Lower leg skin (tissue), 4 donors: ENCODE measurements at regions of chr13 and their contacts with region 1.

Region 1: GRCh38 chr13:77740931-77741596 is 43.6 kb downstream of the SLAIN1 start:
- DNase-seq: no peak
- H3K4me3 ChIP-seq: no peak overlapping the region
- CTCF ChIP-seq: no peak
- POLR2A ChIP-seq: no peak

Region 2: GRCh38 chr13:77599351-77599750 is 141.7 kb before region 1 on chr13:
- intact Hi-C with region 1: loop called (anchors 10 kb)
- DNase-seq: no peak
- H3K4me3 ChIP-seq: no peak overlapping the region
- CTCF ChIP-seq: no peak
- POLR2A ChIP-seq: no peak

Region 3: GRCh38 chr13:78382491-78382890 is 641.4 kb after region 1 on chr13:
- intact Hi-C with region 1: no loop called
- DNase-seq: no peak
- H3K4me3 ChIP-seq: no peak overlapping the region
- CTCF ChIP-seq: no peak
- POLR2A ChIP-seq: no peak